T-cell (primary cell): ENCODE measurements at regions of chr17 and their contacts with region 1.

Region 1: GRCh38 chr17:75344666-75345065 is 55.4 kb upstream of the SLC25A19 start:
- DNase-seq: peak in 21 of 35 experiments; percentile 6 to 65 (median 27)
- ATAC-seq: no peak
- H3K4me3 ChIP-seq: peak overlapping the region in 1 of 2 donors; percentile 2
- H3K4me3 Mint-ChIP-seq: peak overlapping the region in 2 of 3 donors; percentile 70 to 76
- H3K27ac ChIP-seq: peak overlapping the region; percentile 58
- H3K27ac Mint-ChIP-seq: peak overlapping the region; percentile 98
- H3K4me1 ChIP-seq: peaks cover 81 to 93% of the 10 kb centered on the region in 2 experiments
- H3K4me1 Mint-ChIP-seq: peaks cover 93 to 98% (median 95%) of the 10 kb centered on the region in 3 donors
- H3K27me3 ChIP-seq: no peaks in the 10 kb centered on the region
- H3K27me3 Mint-ChIP-seq: no peaks in the 10 kb centered on the region

Region 2: DNA sequence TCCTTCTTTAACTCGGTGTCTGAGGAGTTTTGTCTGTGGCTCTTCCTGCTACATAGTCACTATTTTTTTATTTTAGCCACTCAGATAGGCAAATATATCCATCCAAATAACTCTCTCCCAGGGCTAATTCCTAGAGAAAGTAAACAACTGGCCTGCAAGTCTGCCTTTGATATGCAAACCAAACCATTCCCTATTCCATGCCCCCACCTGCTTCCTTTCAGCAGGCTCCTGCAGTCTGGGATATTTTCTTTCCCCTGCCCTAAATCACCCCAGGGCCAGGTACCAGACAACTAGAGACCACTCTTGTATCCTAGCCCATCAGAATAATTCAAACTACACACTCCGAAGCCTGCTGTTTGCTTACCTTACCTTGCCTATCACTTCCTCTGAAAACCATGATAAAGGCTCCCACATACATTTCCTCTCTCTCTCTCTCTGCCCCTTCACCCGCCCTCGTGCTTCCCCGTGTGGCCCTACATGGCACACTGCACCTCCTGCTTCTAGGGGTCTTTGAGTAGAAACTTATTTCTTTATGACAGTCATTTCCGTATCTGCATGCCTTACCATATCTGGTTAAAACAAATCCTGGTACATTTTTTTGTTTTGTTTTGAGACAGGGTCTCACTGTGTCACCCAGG is 785.7 kb before region 1 on chr17:
- CTCF ChIA-PET with region 1: no interaction called
- POLR2A ChIA-PET with region 1: no interaction called
- DNase-seq: no peak
- ATAC-seq: peak in 1 of 4 experiments; percentile 62
- H3K4me3 ChIP-seq: no peak overlapping the region
- H3K4me3 Mint-ChIP-seq: peak overlapping the region in 1 of 3 donors; percentile 30
- H3K27ac ChIP-seq: no peak overlapping the region
- H3K27ac Mint-ChIP-seq: no peak overlapping the region
- H3K4me1 ChIP-seq: no peaks in the 10 kb centered on the region
- H3K4me1 Mint-ChIP-seq: peaks cover 8 to 9% (median 9%) of the 10 kb centered on the region in 3 donors
- H3K27me3 ChIP-seq: peaks cover 0 to 21% of the 10 kb centered on the region in 2 experiments
- H3K27me3 Mint-ChIP-seq: peaks cover 5 to 16% of the 10 kb centered on the region in 2 donors

Region 3: DNA sequence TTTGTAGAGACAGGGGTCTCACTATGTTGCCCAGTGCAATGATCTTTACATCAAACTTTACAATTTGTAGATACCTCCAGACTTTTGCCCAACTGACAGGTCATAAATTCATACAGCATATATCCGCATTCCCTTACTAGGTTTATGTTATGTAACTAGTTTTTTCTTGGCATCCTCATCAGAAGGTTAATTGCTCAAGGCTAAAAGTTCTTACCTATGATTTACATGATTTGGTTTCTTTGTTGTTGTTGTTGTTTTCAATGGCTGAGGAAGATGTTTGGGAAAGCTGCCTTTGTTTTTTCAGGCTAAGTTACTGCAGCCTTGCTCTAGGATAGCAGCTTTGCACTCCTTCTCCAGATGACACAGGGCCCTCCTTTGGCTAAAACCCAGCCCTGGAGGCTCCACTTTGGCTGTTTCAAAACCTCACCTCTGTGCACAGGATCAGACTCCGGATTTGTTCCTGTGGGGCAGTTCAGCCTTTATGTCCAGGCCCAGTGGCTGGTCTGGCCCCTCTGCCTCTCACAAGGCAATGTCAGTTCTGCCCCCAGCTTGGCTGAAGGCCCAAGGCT is 351.1 kb before region 1 on chr17:
- CTCF ChIA-PET with region 1: no interaction called
- POLR2A ChIA-PET with region 1: interaction called in 1 of 2 experiments, 13 read pairs
- DNase-seq: no peak
- ATAC-seq: no peak
- H3K4me3 ChIP-seq: no peak overlapping the region
- H3K4me3 Mint-ChIP-seq: no peak overlapping the region
- H3K27ac ChIP-seq: no peak overlapping the region
- H3K27ac Mint-ChIP-seq: no peak overlapping the region
- H3K4me1 ChIP-seq: peaks cover 0 to 1% of the 10 kb centered on the region in 2 experiments
- H3K4me1 Mint-ChIP-seq: peaks cover 3 to 5% (median 5%) of the 10 kb centered on the region in 3 donors
- H3K27me3 ChIP-seq: peaks cover 0 to 7% of the 10 kb centered on the region in 2 experiments
- H3K27me3 Mint-ChIP-seq: peaks cover 0 to 3% of the 10 kb centered on the region in 2 donors

Region 4: DNA sequence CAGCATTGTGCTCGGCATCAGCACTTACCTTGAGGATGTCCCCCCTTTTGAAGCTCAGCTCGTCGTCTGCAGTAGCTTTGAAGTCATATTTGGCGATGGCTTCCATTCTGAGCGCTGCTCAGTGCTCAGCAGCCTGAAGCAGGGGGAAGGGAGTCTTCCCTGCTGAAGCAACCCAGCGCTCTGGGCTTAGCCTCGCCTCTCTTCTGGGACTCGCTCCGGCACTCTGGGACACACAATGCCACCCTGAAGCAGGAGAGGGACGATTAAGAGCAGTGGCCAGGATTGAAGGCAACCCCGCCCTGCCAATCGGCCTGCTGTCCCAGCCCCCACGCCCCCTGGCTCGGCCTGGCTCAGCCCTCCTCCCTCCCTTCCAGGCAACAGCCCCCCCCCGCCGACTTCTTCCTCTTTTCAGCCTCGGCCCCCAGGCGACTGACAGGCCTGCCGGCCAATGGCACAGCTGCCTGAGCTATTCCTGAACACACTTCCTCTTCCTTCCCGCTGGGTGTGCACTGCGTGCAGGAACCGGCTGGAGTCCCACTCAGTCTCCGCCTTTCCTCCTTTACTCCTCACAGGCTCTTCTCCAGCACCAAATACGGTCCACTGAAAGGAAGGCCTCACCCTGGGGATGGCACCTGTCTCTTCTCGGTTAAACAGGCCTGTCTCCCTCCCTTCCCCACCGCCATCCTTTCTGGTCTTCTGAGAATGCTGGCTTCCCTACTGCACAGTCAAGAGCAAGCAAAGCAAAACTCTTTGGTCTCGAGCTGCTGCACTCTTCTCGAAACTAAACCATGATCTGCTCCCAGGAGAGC is 49.1 kb after region 1 on chr17:
- CTCF ChIA-PET with region 1: interaction called, 4 to 11 read pairs
- POLR2A ChIA-PET with region 1: no interaction called
- DNase-seq: peak; percentile 59 to 89 (median 72)
- ATAC-seq: peak; percentile 87 to 93 (median 92)
- H3K4me3 ChIP-seq: peak overlapping the region; percentile 53 to 75
- H3K4me3 Mint-ChIP-seq: peak overlapping the region; percentile 88 to 91 (median 89)
- H3K27ac ChIP-seq: peak overlapping the region; percentile 38
- H3K27ac Mint-ChIP-seq: peak overlapping the region; percentile 79 to 92
- H3K4me1 ChIP-seq: peaks cover 39 to 46% of the 10 kb centered on the region in 2 experiments
- H3K4me1 Mint-ChIP-seq: peaks cover 84 to 93% (median 85%) of the 10 kb centered on the region in 3 donors
- H3K27me3 ChIP-seq: no peaks in the 10 kb centered on the region
- H3K27me3 Mint-ChIP-seq: no peaks in the 10 kb centered on the region

Region 5: DNA sequence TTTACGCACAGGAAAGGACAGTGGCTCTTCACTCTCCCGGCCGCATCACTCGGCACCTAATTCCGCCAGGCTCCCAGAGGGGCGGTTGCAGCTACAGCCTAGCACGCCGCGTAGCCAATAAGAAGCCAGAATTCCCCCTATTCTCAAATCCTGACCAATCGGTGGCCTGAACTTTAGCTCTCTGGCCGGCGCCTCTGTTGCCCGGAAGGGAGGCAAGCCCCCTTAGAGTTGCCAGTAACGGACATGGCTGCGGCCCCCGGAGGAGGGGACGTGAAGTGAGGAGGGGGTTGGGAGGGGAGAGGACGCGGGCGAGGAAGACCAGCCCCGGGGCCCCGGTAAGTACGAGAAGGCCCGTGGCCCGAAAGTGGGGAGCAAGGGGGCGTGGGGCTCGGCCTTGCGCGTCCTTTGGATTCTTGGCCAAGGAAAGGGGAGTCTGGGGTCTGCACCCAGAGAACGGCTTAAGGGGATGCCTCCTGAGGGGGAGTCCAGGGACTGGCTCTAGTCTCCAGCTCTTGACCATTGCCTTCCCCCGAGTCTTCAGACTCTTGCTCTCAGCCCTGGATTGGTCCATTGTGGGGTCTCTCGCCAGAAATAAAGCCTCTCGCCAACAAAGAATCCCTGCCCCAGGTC is 111.9 kb after region 1 on chr17 and contains the start of gene TMEM94:
- CTCF ChIA-PET with region 1: no interaction called
- POLR2A ChIA-PET with region 1: no interaction called
- DNase-seq: peak; percentile 75 to 96 (median 88)
- ATAC-seq: peak; percentile 94 to 99 (median 94)
- H3K4me3 ChIP-seq: peak within 1 kb of the TSS; percentile 96
- H3K4me3 Mint-ChIP-seq: peak within 1 kb of the TSS; percentile 89 to 94 (median 90)
- H3K27ac ChIP-seq: peak within 1 kb of the TSS; percentile 68
- H3K27ac Mint-ChIP-seq: peak within 1 kb of the TSS; percentile 91 to 95
- H3K4me1 ChIP-seq: peaks cover 13 to 18% of the 10 kb centered on the region in 2 experiments
- H3K4me1 Mint-ChIP-seq: peaks cover 32 to 41% (median 34%) of the 10 kb centered on the region in 3 donors
- H3K27me3 ChIP-seq: no peaks in the 10 kb centered on the region
- H3K27me3 Mint-ChIP-seq: no peaks in the 10 kb centered on the region
- total RNA-seq, gene TMEM94: 78.5 to 125 (median 105) TPM